Heart right ventricle (tissue), 16 donors: ENCODE measurements at regions of chr7 and their contacts with region 1.

Region 1: GRCh38 chr7:74466196-74466813 is 12.6 kb downstream of the GTF2IRD1 start:
- DNase-seq: peak; percentile 23 to 39
- ATAC-seq: peak; percentile 39 to 91 (median 84)
- H3K4me3 ChIP-seq: no peak overlapping the region
- H3K27ac ChIP-seq: peak overlapping the region; percentile 18 to 86 (median 80)
- H3K4me1 ChIP-seq: peaks cover 0 to 32% (median 9%) of the 10 kb centered on the region in 9 donors
- H3K27me3 ChIP-seq: no peaks in the 10 kb centered on the region
- CTCF ChIP-seq: no peak

Region 2: GRCh38 chr7:74479961-74480829 is 13.9 kb after region 1 on chr7:
- intact Hi-C with region 1: no loop called
- DNase-seq: peak; percentile 82 to 83
- ATAC-seq: peak; percentile 63 to 80 (median 73)
- H3K4me3 ChIP-seq: peak overlapping the region in 9 of 10 donors; percentile 24 to 64 (median 53)
- H3K27ac ChIP-seq: peak overlapping the region; percentile 84 to 98 (median 94)
- H3K4me1 ChIP-seq: peaks cover 25 to 81% (median 58%) of the 10 kb centered on the region in 9 donors
- H3K27me3 ChIP-seq: peaks cover 0 to 14% (median 0%) of the 10 kb centered on the region in 7 donors
- CTCF ChIP-seq: peak in 2 of 9 donors; percentile 7 to 20

Region 3: DNA sequence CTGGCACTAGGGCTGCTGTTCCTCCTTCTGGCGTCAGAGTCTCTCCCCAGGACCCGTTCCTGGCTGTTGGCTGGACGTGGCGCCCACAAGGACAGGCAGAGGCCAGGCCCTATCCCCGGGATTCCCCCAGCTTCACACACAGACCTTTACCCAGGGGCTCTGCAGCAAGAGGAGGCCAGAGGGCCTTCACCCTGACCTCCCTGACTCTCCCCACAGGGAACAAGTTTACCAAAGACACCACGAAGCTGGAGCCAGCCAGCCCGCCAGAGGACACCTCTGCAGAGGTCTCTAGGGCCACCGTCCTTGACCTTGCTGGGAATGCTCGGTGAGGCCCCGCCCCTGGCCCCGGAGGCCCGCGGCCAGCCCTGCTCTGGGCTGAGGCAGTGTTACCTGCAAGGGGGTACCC is 69.6 kb after region 1 on chr7:
- intact Hi-C with region 1: loop called in 2 of 10 experiments (anchors 5 to 10 kb)
- DNase-seq: peak in 1 of 2 donors; percentile 39
- ATAC-seq: peak in 7 of 8 donors; percentile 17 to 51 (median 37)
- H3K4me3 ChIP-seq: no peak overlapping the region
- H3K27ac ChIP-seq: peak overlapping the region in 9 of 10 donors; percentile 45 to 76 (median 68)
- H3K4me1 ChIP-seq: peaks cover 0 to 14% (median 2%) of the 10 kb centered on the region in 9 donors
- H3K27me3 ChIP-seq: no peaks in the 10 kb centered on the region
- CTCF ChIP-seq: no peak

Region 4: DNA sequence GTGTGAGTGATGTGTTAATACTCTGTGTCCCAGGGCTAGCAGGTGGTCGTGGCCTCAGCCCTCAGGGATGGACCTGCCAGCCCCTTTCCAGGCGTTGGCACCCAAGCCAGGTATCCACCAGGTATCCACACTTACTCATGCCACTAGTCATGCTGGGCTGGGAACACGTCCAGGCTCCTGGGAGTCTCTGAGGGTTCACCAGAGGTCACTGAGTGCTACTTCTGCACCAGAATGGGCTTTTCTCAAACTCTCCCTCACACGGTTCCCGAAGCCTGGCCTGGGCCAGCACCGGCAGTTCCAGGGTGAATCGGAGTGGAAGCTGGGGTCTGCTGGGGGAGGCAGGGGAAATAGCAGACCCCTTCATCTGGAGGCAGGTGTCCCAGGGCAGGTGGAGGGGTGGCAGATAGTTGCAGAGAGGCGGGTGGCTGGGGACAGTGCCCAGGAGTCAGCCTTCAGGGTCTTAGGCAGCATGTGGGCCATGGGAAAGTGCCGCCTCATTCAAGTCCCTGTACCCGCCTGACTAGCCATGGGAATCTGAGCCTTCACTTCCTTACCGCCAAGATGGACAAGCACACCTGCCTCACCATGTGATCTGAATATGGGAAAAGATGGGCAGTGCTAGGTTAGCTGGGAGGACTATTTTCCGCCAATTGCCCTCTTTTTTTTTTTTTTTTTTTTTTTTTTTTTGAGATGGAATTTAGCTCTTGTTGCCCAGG is 95.8 kb after region 1 on chr7:
- intact Hi-C with region 1: loop called in 1 of 10 experiments (anchors 5 kb)
- DNase-seq: no peak
- ATAC-seq: peak in 1 of 8 donors; percentile 5
- H3K4me3 ChIP-seq: no peak overlapping the region
- H3K27ac ChIP-seq: no peak overlapping the region
- H3K4me1 ChIP-seq: no peaks in the 10 kb centered on the region
- H3K27me3 ChIP-seq: no peaks in the 10 kb centered on the region
- CTCF ChIP-seq: no peak